ENCODE measurements at regions of chr20 and their contacts with region 1.

Region 1: GRCh38 chr20:23361598-23362384 is at the start of gene GZF1:
- DNase-seq: peak; percentile 97
- ATAC-seq: peak; percentile 89
- H3K4me3 ChIP-seq: peak within 1 kb of the TSS; percentile 76
- H3K27ac ChIP-seq: peak within 1 kb of the TSS; percentile 83
- H3K4me1 ChIP-seq: peaks cover 11% of the 10 kb centered on the region
- H3K27me3 ChIP-seq: no peaks in the 10 kb centered on the region
- CTCF ChIP-seq: no peak
- POLR2A ChIP-seq: peak; percentile 95
- RAD21 ChIP-seq: no peak
- total RNA-seq, gene GZF1: 23.7 and 30.3 TPM in 2 replicates

Region 2: GRCh38 chr20:23331450-23332350 is 30.1 kb before region 1 on chr20:
- CTCF ChIA-PET with region 1: no interaction called
- POLR2A ChIA-PET with region 1: no interaction called
- dilution Hi-C with region 1: no loop called
- in situ Hi-C with region 1: no loop called
- intact Hi-C with region 1: no loop called
- DNase-seq: no peak
- ATAC-seq: no peak
- H3K4me3 ChIP-seq: no peak overlapping the region
- H3K27ac ChIP-seq: no peak overlapping the region
- H3K4me1 ChIP-seq: no peaks in the 10 kb centered on the region
- H3K27me3 ChIP-seq: no peaks in the 10 kb centered on the region
- CTCF ChIP-seq: no peak
- POLR2A ChIP-seq: no peak
- RAD21 ChIP-seq: no peak

Region 3: GRCh38 chr20:23399568-23400241 is 37.9 kb after region 1 on chr20:
- CTCF ChIA-PET with region 1: no interaction called
- POLR2A ChIA-PET with region 1: no interaction called
- dilution Hi-C with region 1: no loop called
- in situ Hi-C with region 1: no loop called
- intact Hi-C with region 1: loop called (anchors 5 kb)
- DNase-seq: peak; percentile 58
- ATAC-seq: peak; percentile 15; the same call in 1 of the 2 replicates
- H3K4me3 ChIP-seq: no peak overlapping the region
- H3K27ac ChIP-seq: no peak overlapping the region
- H3K4me1 ChIP-seq: peaks cover 13% of the 10 kb centered on the region
- H3K27me3 ChIP-seq: no peaks in the 10 kb centered on the region
- CTCF ChIP-seq: no peak
- POLR2A ChIP-seq: no peak
- RAD21 ChIP-seq: no peak

Region 4: GRCh38 chr20:23420943-23421931 is 59.4 kb after region 1 on chr20 and contains the start of gene NAPB:
- CTCF ChIA-PET with region 1: no interaction called
- POLR2A ChIA-PET with region 1: no interaction called
- dilution Hi-C with region 1: no loop called
- in situ Hi-C with region 1: no loop called
- intact Hi-C with region 1: loop called (anchors 1 kb)
- DNase-seq: peak; percentile 88
- ATAC-seq: peak; percentile 99
- H3K4me3 ChIP-seq: peak within 1 kb of the TSS; percentile 67
- H3K27ac ChIP-seq: peak within 1 kb of the TSS; percentile 75
- H3K4me1 ChIP-seq: peaks cover 1% of the 10 kb centered on the region; the same call in 1 of the 2 replicates
- H3K27me3 ChIP-seq: no peaks in the 10 kb centered on the region
- CTCF ChIP-seq: peak; percentile 37
- POLR2A ChIP-seq: peak; percentile 63
- RAD21 ChIP-seq: peak; percentile 26; the same call in 1 of the 2 replicates
- total RNA-seq, gene NAPB: 3.9 and 5.2 TPM in 2 replicates

Region 5: GRCh38 chr20:23637282-23638221 is 275.8 kb after region 1 on chr20 and contains the start of gene CST3:
- CTCF ChIA-PET with region 1: no interaction called
- POLR2A ChIA-PET with region 1: no interaction called
- dilution Hi-C with region 1: no loop called
- in situ Hi-C with region 1: no loop called
- intact Hi-C with region 1: loop called (anchors 5 kb)
- DNase-seq: peak; percentile 81
- ATAC-seq: peak; percentile 89
- H3K4me3 ChIP-seq: peak within 1 kb of the TSS; percentile 96
- H3K27ac ChIP-seq: peak within 1 kb of the TSS; percentile 98
- H3K4me1 ChIP-seq: peaks cover 11% of the 10 kb centered on the region
- H3K27me3 ChIP-seq: no peaks in the 10 kb centered on the region
- CTCF ChIP-seq: no peak
- POLR2A ChIP-seq: peak; percentile 92
- RAD21 ChIP-seq: no peak
- total RNA-seq, gene CST3: 26.0 and 30.8 TPM in 2 replicates

Measured in IMR-90 (cell line).